ENCODE measurements at regions of chr16 and their contacts with region 1.

Region 1: DNA sequence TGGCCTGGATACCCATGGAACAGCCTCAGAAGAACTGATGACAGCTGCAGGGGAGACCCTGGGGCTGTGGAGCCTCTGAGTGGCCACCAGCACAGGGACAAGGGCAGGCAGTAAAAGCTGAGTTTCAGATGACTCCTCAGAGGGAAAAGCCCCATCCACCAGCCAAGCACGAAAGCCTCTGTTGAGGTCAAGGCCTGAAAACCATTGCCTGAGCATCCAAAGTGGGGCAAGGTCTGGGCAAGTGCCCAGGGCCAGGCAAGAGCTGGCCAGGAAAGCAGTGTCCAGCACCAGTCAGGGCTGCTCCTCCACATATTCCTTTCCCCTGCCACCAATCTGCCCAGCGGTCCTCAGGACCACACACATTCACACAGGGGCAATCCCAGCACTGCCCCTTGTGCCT is 16.4 kb downstream of the ATP6V0D1 start:
- DNase-seq: no peak
- H3K4me3 ChIP-seq: no peak overlapping the region
- H3K27ac ChIP-seq: no peak overlapping the region
- H3K4me1 ChIP-seq: peaks cover 46 to 83% (median 65%) of the 10 kb centered on the region in 4 donors
- H3K27me3 ChIP-seq: no peaks in the 10 kb centered on the region
- CTCF ChIP-seq: no peak
- EP300 ChIP-seq: no peak
- POLR2A ChIP-seq: no peak

Region 2: DNA sequence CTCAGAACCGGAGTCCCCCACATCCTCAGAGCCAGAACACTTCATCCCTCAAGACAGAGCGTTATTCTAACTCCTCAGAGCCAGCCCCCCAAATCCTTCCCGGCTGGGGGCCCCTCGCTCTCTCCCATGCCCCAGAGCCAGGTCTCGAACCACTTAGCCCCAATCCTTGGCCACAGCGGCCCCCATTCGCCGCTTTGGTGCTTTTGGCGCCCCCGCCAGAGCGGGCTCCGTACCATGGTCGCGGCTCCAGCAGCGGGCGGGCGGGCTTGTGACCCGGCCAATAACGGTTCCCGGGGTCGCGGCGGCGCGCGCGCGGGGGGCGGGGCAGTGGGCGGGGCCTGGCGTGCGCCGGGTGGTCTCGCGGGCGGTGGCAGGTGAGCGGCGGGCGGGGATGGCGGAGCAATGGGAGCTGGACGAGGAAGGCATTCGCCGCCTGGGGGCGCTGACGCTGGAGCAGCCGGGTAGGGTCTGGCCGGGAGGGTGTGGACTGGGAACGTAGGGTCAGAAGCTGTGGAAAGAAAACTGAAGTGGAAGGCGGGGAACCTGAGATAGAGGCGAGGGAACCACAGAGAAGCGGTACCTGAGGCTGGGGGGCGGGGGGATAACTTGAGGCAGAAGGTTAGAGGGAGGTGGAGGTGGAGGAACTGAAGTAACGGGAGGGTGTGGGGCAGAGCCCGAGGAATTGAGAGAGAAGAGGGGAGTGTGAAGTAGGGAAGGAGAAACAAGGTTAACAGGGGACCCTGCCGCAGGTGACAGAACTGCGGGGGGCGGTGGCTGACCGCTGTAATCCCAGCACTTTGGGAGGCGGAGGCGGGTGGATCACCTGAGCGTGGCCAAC is 137.9 kb before region 1 on chr16 and contains the starts of genes KCTD19 and LRRC36:
- intact Hi-C with region 1: no loop called
- DNase-seq: peak; percentile 62
- H3K4me3 ChIP-seq: peak within 1 kb of the TSS; percentile 53 to 69 (median 58)
- H3K27ac ChIP-seq: no peak within 1 kb of the TSS
- H3K4me1 ChIP-seq: peaks cover 6 to 15% (median 14%) of the 10 kb centered on the region in 4 donors
- H3K27me3 ChIP-seq: peaks cover 0 to 40% (median 0%) of the 10 kb centered on the region in 4 donors
- CTCF ChIP-seq: peak; percentile 25 to 52 (median 28)
- EP300 ChIP-seq: no peak
- POLR2A ChIP-seq: no peak
- total RNA-seq, gene KCTD19: not detected
- total RNA-seq, gene LRRC36: 0.33 TPM in 1 of 4 donors, not detected in the others

Region 3: DNA sequence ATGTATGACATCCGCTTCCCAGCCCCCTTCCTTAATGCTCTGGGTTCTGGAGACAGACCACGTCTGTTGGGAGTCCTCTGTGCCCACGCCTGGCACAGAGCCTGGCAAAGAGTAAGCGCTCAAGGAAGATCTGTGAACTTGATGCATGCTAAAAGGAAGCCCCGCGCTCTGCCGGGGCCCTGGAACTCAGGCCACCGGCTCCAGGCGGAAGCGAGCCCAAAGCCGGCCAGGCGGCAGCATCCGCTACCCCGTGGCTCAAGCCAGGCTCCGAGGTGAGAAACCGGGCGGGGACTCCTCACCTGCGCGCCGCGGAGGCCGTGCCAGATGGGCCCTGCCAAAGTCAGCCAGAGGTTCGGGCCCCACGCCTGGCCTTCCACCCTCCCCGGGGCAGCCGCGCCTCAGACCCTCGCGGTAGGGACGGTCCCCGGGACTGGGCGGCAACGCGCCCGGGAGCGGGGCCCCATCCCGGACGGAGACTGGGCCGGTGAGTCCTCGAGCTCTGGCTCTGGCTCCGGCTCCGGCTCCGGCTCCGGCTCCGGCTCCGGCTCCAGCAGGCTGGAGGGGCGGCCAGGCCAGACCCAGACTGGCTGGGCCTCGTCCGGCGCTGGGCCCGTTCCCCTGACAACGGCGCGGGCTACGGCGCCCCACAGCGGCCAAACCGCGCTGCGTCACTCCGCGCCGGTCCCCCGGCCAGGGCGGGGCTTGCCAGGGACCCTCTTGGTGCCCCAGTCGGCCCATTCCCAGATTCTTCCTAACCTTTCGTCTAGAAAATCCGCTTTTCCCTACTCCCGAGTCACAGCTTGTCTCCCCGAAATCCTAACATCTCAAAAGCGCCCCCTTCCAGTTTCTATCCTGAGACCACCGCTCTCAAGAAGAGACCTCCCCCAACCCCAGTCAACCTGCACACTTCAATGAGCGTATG is 48.4 kb before region 1 on chr16 and contains the start of gene ZDHHC1:
- intact Hi-C with region 1: no loop called
- DNase-seq: no peak
- H3K4me3 ChIP-seq: peak within 1 kb of the TSS; percentile 70 to 93 (median 77)
- H3K27ac ChIP-seq: peak within 1 kb of the TSS; percentile 77 to 87 (median 82)
- H3K4me1 ChIP-seq: peaks cover 12 to 28% (median 19%) of the 10 kb centered on the region in 4 donors
- H3K27me3 ChIP-seq: no peaks in the 10 kb centered on the region
- CTCF ChIP-seq: peak; percentile 51 to 62 (median 57)
- EP300 ChIP-seq: no peak
- POLR2A ChIP-seq: no peak
- total RNA-seq, gene ZDHHC1: 11.6 to 27.5 (median 20.8) TPM

Region 4: DNA sequence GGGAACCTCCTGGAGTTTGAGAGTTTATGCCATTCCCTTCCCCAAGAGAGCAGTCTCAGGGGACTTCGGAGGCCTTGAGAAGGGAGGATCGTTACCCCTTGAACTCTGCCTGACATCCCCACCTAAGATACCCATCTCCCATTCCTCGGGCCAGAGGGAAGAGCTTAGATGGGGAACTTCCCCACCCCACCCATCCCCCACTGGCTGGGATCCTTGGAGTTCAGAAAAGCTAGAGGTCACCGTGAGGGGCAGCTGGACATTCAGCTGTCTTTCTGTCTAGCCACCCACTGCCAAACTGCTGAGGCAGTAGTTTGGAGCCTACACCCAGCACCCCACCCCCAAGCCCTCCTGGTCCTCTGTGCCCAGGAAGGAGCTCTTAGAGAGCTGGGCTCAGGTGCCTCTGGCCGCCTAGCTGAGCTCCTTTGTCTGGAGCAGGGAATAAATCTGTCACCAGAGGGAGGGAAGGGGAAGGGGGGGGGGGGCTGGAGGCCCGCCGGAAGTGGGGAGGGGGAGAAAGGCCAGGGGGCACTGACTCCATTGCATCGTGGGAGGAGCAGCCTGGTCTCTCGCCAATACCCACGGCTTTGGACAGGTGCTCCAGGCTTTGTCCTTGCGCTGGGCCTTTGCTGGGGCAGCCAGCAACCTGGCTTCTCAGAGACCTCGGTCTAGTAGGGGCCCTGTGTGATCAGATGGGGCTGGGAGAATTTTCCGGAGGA is 32.6 kb before region 1 on chr16:
- intact Hi-C with region 1: loop called (anchors 2 kb)
- DNase-seq: no peak
- H3K4me3 ChIP-seq: peak overlapping the region; percentile 56 to 66 (median 59)
- H3K27ac ChIP-seq: peak overlapping the region in 1 of 4 donors; percentile 36
- H3K4me1 ChIP-seq: peaks cover 10 to 43% (median 30%) of the 10 kb centered on the region in 4 donors
- H3K27me3 ChIP-seq: peaks cover 0 to 32% (median 0%) of the 10 kb centered on the region in 4 donors
- CTCF ChIP-seq: no peak
- EP300 ChIP-seq: no peak
- POLR2A ChIP-seq: no peak

Measured in esophagus muscularis mucosa (tissue), 4 donors.